Ascending aorta (tissue), 2 donors: ENCODE measurements at regions of chr12 and their contacts with region 1.

Region 1: DNA sequence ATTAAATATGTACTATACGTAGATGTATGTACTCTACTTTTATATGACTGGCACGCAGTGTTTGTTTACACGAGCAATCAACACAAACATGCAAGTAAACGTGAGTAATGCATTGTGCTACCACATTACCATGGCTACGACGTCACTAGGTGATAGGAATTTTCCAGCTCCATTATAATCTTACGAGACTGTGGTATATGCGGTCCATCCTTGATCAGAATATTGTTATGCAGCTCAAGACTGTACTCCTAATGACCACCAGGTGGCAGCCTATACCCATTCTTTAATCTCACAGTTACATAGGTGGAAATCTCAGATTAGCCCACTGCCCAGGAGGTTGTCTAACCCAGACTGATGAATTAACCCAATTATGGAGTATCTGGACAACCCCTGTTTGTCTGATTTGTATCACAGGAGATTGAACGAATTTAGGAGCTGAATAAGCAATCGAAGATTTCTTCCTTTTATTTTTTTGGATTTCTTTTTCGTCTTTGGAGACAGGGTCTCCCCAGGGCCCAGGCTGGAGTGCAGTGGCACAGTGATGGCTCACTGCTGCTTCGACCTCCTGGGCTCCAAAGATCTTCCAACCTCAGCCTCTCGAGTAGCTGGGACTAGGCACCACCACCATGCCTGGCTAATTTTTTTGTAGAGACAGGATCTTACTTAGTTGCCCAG is 8.7 kb upstream of the TESPA1 start:
- DNase-seq: peak in 1 of 2 donors; percentile 65
- H3K4me3 ChIP-seq: no peak overlapping the region
- H3K27ac ChIP-seq: no peak overlapping the region
- H3K4me1 ChIP-seq: no peaks in the 10 kb centered on the region
- H3K27me3 ChIP-seq: no peaks in the 10 kb centered on the region
- CTCF ChIP-seq: peak; percentile 72 to 89 (median 78)

Region 2: DNA sequence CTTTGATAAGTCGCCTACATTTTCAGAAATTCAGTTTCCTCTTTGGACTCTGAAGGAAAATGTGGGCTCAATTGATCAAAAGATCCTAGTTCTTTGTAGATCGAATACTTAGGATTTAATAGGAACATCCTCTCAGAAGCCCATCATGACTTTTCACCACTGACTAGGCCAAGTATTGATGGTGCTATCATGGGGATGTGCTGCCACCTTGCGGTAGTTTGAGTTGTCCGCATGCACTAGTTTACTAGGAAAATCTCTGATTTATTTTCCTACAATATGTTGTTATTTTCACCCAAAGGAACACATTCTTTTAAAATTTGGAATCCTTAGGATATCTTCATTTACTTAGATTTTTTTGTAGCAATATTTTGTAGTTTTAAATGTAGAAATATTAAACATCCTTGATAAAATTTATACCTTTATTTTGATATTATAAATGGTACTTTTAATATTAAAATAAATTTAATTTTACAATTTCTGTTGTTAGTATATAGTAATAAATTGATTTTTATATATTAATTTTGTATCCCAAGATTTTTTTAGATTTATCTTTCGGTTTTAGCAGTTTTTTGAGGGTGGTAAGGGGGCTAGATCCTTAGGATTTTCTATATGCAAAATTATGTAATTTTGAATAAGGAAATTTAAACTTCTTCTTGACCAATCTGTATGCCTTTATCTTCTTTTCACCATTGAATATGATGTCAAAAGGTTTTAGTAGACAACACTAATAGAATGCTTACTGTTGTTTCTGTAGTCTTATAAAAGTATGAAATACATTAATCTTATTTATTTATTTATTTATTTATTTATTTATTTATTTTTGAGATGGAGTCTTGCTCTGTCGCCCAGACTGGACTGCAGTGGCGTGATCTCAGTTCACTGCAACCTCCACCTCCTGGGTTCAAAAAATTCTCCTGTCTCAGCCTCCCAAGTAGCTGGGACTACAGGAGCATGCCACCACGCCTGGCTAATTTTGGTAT is 80.0 kb after region 1 on chr12:
- intact Hi-C with region 1: loop called (anchors 1 kb)
- DNase-seq: peak in 1 of 2 donors; percentile 67
- H3K4me3 ChIP-seq: no peak overlapping the region
- H3K27ac ChIP-seq: no peak overlapping the region
- H3K4me1 ChIP-seq: no peaks in the 10 kb centered on the region
- H3K27me3 ChIP-seq: no peaks in the 10 kb centered on the region
- CTCF ChIP-seq: peak; percentile 42 to 73 (median 65)

Region 3: DNA sequence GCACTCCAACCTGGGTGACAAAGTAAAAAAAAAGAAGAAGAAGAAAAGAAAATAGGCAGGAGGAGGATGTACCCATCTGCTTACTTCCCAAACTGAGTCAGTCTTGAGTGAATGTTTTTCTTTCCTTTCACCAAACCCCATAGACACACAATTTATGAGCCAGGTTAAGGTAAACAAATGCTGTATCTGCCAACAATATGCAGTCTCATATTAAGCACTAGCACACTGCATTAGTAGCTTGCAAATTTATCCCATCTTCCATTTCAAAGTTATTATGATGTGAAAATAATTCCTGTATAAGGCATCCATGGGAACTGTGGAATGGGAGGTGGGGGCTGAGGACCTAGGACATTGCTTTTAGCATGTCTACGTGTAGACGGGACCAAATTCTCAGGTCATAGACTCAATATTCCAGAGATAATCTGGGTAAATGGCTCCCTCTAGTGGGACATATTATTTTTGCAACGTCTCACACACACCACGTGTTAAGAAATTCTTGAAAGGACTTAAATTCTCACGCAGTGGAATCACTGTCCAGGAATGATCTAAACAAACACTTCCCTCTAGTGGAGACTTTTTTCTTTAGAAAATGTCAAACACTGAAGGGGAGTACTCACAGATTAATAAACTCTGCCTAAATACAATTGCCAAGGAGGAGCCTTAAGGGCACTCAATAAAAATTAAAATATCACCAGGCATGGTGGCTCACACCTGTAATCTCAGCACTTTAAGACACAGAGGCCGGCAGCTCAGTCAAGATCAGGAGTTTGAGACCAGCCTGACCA is 626.2 kb after region 1 on chr12:
- intact Hi-C with region 1: loop called (anchors 5 kb)
- DNase-seq: no peak
- H3K4me3 ChIP-seq: no peak overlapping the region
- H3K27ac ChIP-seq: no peak overlapping the region
- H3K4me1 ChIP-seq: no peaks in the 10 kb centered on the region
- H3K27me3 ChIP-seq: no peaks in the 10 kb centered on the region
- CTCF ChIP-seq: peak; percentile 69 to 80 (median 70)

Region 4: GRCh38 chr12:55670276-55670675 is 677.0 kb after region 1 on chr12:
- intact Hi-C with region 1: no loop called
- DNase-seq: no peak
- H3K4me3 ChIP-seq: no peak overlapping the region
- H3K27ac ChIP-seq: no peak overlapping the region
- H3K4me1 ChIP-seq: no peaks in the 10 kb centered on the region
- H3K27me3 ChIP-seq: no peaks in the 10 kb centered on the region
- CTCF ChIP-seq: no peak